ENCODE measurements at regions of chr14 and their contacts with region 1.

Region 1: GRCh38 chr14:30214461-30215090 is 286.9 kb upstream of the PRKD1 start:
- DNase-seq: peak; percentile 4
- ATAC-seq: peak; percentile 33
- H3K4me3 Mint-ChIP-seq: no peak overlapping the region
- H3K27ac Mint-ChIP-seq: no peak overlapping the region
- H3K4me1 Mint-ChIP-seq: no peaks in the 10 kb centered on the region
- H3K27me3 Mint-ChIP-seq: no peaks in the 10 kb centered on the region

Region 2: DNA sequence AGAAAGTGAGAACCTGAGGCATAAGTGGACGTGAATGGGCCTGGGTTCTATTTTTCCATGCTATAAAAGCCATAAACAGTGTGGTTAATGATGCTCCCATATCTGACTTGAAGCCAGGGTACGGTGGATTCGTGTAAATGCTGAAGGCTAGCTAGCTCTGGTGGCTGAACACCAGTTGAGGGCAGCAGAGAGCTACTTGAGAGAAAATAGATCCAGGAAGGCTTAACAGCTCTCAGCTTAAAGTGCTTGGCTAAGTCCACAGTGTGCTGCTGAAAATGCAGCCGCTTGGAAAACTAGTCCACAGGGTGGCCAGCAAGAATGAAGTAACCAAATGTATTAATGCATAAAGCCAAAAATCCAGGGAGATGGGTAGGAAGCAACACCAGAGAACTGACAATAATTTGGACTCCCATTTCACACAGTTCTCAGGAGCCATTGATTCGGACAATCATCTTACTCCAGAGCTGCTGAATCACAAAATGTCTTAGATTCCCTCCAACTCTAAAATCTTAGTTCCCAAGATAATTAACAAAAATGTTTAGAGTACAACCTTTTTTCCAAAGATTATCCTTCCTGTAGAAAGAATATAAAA is 1463.0 kb before region 1 on chr14:
- CTCF ChIA-PET with region 1: no interaction called
- POLR2A ChIA-PET with region 1: no interaction called
- intact Hi-C with region 1: loop called (anchors 1 to 5 kb)
- DNase-seq: peak; percentile 36
- ATAC-seq: no peak
- H3K4me3 Mint-ChIP-seq: no peak overlapping the region
- H3K27ac Mint-ChIP-seq: no peak overlapping the region
- H3K4me1 Mint-ChIP-seq: no peaks in the 10 kb centered on the region
- H3K27me3 Mint-ChIP-seq: peaks cover 27% of the 10 kb centered on the region

Region 3: DNA sequence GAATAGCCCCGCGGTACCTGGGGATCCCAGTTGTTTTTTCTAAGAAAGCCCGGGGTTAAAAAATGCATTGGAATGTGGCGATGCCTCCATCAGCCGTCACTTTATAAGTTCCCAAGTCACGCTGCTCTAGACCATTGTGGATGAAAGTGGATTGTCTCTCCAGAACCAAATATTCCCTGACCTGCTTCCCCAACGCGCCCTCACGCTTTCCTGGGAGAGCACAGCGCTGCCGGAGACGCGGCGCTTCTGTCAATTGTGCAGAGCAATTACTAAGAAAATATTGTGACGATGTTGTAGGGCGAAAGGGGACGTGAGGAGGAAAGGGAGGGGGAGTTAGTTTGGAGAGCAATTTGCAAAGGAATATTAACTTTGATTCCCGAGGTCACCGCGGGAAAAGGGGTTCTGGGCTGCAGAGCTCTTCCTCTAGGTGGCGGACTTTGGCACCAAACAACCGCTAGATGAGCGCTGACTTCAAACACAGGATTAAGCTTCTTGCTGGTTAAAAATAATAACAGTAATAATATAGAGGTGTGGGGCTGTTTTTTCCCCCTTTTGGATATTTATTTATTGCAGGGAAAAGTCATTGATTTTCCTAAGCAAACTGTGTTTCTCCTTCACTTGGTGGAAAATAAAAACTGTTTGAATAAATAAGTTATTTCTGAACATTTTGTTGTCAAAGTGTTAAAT is 1457.5 kb before region 1 on chr14:
- CTCF ChIA-PET with region 1: no interaction called
- POLR2A ChIA-PET with region 1: no interaction called
- intact Hi-C with region 1: loop called (anchors 1 to 5 kb)
- DNase-seq: peak; percentile 28
- ATAC-seq: no peak
- H3K4me3 Mint-ChIP-seq: no peak overlapping the region
- H3K27ac Mint-ChIP-seq: no peak overlapping the region
- H3K4me1 Mint-ChIP-seq: no peaks in the 10 kb centered on the region
- H3K27me3 Mint-ChIP-seq: peaks cover 68% of the 10 kb centered on the region

Region 4: DNA sequence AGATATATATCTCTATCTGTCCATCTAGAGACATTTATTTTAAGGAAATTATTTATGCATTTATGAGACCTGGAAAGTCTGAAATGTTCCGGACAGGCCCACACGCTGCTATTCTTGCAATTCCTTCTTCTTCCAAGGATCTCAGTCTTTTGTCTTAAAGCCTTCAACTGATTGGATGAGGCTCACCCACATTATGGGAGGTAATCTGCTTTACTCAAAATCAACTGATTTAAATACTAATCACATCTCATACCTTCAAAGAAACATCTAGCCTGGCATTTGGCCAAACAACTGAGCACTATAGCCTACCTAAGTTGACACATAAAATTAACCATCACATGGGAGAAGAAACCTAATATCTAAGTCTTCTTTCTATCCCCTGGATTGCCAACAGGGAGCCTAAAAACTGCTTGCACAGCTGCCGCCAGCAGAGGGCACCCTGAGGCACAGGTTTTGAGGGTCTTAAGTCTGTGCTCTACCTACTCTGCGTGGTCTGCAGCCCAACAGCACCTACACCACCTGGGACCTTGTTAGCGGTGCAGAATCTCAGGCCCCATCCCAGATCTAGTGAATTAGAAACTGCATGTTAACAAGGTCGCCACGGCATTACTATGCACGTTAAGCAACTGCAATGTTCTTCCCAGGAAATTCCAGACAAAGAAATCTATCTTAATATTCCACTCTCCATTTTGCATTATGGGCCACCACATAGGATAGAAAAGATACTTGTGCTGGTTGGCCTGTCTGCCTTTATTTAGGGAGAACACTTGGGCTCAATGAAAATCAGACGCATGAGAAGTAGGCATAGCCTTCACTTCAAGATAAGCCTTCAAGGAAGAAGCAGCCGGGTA is 1198.3 kb before region 1 on chr14:
- CTCF ChIA-PET with region 1: no interaction called
- POLR2A ChIA-PET with region 1: no interaction called
- intact Hi-C with region 1: loop called in 1 of 2 experiments (anchors 2 kb)
- DNase-seq: peak; percentile 43
- ATAC-seq: no peak
- H3K4me3 Mint-ChIP-seq: no peak overlapping the region
- H3K27ac Mint-ChIP-seq: no peak overlapping the region
- H3K4me1 Mint-ChIP-seq: no peaks in the 10 kb centered on the region
- H3K27me3 Mint-ChIP-seq: no peaks in the 10 kb centered on the region

Region 5: GRCh38 chr14:30077946-30078345 is 136.6 kb before region 1 on chr14:
- CTCF ChIA-PET with region 1: no interaction called
- POLR2A ChIA-PET with region 1: no interaction called
- intact Hi-C with region 1: no loop called
- DNase-seq: no peak
- ATAC-seq: no peak
- H3K4me3 Mint-ChIP-seq: no peak overlapping the region
- H3K27ac Mint-ChIP-seq: no peak overlapping the region
- H3K4me1 Mint-ChIP-seq: no peaks in the 10 kb centered on the region
- H3K27me3 Mint-ChIP-seq: no peaks in the 10 kb centered on the region